ENCODE measurements at regions of chr5 and their contacts with region 1.

Region 1: DNA sequence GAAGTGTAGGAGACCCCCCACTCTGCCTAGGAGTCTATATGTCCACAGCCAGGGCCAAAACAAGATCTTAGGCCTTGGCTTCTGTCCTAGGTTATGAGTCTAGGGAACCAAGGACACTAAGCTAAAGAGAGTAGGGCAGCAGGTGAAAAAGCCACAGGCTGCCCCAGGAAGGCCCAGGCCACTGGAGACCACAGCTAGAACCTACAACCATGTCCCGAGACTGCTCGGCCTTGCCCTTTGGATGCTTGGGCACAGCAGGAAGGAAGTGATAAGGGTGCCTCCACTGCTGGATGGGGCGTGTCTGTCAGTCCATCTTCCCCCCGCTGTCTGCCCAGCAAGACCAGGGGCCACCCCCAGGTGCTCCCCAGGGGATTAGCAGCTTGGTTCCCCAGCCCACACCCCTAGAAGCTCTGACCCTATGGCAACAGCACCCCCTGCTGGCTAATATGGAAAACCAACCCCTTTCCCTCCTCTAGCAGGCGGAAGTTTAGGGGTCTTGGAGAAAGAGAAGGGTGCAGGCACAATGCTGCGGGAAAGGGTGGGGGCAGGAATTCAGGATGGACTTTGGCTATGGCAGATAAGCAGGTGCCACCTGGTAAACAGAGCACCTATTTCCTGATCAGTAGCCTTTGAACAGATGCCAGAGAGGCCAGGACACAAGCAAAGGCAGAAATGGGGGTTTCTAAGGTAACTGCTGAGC is 10.5 kb upstream of the IRF1 start:
- DNase-seq: peak; percentile 71
- H3K4me3 ChIP-seq: no peak overlapping the region
- H3K27ac ChIP-seq: peak overlapping the region; percentile 27
- H3K4me1 ChIP-seq: peaks cover 42% of the 10 kb centered on the region
- H3K27me3 ChIP-seq: no peaks in the 10 kb centered on the region
- CTCF ChIP-seq: peak; percentile 78 to 79
- POLR2A ChIP-seq: no peak

Region 2: DNA sequence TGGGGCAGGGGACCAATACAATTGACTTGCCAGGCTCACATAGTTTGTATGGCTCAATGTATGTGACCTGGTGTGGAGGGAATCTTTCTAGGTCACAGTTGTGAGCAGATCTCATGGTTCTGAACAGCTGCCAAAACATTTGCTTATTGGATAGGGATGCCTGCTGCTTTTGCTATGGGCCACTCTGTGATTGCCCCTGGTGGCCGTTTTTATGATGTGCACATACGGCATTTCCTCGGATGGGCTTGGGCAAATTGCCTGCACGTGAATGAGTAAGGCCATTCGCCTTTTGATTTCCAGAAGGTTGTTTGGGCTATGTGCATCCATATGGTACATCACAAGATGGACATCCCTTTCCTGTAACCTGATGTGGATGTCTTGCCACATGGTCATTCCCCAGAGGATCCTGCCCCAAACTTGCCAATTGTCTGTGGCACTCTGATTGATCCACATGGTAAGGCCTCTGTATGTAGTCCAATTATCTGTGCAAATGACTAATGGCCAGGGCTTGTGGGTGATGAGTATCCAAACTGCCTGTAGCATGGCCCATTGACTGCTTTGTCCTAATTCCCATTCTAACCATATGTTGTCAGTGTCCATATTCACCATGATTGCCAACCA is 217.5 kb before region 1 on chr5:
- CTCF ChIA-PET with region 1: no interaction called
- POLR2A ChIA-PET with region 1: no interaction called
- dilution Hi-C with region 1: no loop called
- intact Hi-C with region 1: no loop called
- DNase-seq: peak; percentile 62
- H3K4me3 ChIP-seq: no peak overlapping the region
- H3K27ac ChIP-seq: no peak overlapping the region
- H3K4me1 ChIP-seq: no peaks in the 10 kb centered on the region
- H3K27me3 ChIP-seq: peaks cover 0 to 2% of the 10 kb centered on the region in 2 experiments
- CTCF ChIP-seq: peak; percentile 69 to 71
- POLR2A ChIP-seq: no peak

Region 3: DNA sequence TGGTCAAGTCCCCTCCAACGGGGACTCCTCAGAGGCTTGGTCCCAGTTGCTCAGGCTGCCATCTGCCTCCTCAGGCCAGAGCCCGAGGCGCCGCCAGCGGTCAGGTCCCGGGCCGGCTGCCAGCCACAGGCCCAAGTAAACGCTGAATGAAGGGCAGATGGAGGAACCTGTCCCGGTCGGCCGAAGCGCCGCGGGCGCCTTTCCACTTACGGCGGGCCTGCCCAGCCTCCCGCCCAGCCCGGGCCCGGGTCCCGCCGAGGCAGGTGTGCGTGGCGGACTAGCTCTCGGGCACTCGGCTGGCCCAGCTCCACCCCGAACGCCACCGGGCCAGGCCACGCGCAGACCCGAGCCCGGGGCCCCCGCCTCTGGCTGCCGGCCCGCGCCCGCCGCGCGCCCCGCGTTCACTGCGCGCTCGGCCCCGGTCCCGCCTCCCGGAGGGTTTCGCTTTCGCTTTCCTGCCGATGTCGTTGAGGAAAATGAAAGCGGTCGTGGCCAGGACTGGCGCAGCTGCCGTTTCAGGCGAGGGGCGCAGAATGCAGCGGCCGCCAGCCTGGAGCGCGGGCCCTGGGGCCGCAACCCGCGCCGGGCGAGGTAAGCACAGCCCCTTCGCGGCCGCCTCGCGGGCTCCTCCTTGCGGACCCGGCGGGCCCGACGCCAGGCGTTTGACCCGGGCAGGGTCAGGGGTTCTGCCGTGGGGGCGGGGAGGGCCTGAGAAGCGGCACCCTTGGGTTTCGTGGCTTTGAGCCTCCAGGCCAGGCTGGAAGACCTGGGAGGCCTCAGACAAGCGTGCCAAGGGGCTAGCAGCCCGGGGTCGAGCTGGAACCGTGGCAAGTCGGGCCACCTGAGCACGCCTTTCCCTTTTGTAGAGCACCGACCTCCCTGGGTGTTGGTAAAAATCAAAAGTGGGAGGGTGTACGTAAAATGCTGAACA is 90.4 kb before region 1 on chr5:
- CTCF ChIA-PET with region 1: interaction called, 7 read pairs
- POLR2A ChIA-PET with region 1: no interaction called
- dilution Hi-C with region 1: no loop called
- intact Hi-C with region 1: loop called (anchors 1 kb)
- DNase-seq: peak; percentile 79
- H3K4me3 ChIP-seq: peak overlapping the region; percentile 69 to 77 (median 76)
- H3K27ac ChIP-seq: peak overlapping the region; percentile 92
- H3K4me1 ChIP-seq: peaks cover 46% of the 10 kb centered on the region
- H3K27me3 ChIP-seq: no peaks in the 10 kb centered on the region
- CTCF ChIP-seq: peak; percentile 72 to 82
- POLR2A ChIP-seq: peak; percentile 48

Region 4: DNA sequence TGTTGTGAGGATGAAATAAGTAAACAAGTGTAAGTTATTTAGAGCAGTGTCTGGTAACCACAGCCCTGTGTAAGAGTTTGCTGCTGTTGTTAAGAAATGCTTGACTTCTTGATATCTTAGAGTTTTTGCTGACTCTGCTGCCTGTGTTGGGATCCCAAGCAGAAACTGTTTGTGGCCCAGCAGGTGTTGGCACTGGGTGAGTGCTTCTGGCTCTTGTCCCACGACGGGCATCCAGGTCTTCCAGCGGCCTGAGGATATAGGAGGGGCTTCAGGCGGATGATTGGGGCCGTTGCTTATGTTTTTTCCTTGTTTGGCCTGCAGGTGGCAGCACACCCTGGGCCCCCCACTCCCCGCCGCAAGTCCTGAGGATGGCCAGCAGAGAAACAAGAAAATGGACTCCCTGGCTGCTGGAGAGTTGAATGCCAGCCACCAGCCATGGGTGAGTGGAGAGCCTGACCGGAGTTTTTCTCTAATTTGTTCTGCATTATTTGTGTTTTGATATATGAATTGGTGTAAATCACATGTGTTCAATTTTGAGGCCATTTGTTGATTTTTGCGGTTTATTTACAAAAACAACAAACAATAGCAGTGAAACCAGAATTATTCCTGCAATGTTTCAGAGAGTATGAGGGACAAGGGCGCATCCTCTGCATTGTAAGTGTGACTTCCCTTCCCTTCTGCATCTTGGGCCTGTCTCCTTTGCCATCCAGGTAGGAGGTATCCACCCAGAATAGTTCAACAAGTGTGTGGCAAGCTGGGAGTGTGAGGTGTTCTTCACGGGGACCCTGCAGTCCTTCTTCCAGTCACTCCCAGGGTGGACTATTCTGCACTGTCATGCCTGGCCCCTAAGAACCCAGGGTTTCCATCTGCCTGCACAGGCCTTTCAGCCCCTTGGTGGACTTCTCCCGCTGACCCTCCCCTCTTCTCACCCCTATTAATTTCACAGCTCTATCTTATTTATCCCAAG is 81.3 kb before region 1 on chr5:
- CTCF ChIA-PET with region 1: interaction called, 38 read pairs
- POLR2A ChIA-PET with region 1: no interaction called
- dilution Hi-C with region 1: no loop called
- intact Hi-C with region 1: loop called (anchors 1 kb)
- DNase-seq: peak; percentile 90
- H3K4me3 ChIP-seq: no peak overlapping the region
- H3K27ac ChIP-seq: peak overlapping the region; percentile 6
- H3K4me1 ChIP-seq: peaks cover 41% of the 10 kb centered on the region
- H3K27me3 ChIP-seq: no peaks in the 10 kb centered on the region
- CTCF ChIP-seq: peak; percentile 77 to 83
- POLR2A ChIP-seq: no peak

Region 5: DNA sequence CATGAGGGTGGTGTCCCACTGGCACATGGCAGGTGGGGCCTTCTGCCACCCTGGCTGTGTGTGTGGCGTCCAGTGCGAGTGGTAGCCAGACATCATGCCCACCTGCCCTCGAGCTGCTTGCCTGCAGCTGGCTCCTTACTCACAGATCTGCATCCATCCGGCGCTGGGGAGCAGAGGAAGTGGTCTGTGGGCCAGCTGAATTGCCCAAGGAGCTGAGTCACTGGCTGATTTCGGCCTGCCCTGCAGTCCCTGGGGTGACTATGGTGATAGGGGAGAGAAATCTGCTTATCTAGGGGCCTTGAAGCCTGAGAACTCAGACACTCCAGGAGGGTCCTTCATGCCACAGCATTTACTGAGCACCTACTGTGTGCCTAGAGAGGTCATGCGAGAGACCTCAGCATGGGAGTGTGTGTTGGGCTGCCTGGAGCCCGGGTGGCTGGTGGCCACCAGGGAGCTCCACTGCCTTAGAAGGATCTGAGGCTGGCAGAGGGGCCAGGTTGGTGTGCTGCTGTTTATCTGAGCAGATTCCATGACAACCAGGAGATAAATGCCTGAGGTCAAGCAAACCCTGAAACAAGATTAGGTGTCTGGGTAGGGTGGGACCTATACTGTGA is 74.4 kb before region 1 on chr5:
- CTCF ChIA-PET with region 1: interaction called, 24 read pairs
- POLR2A ChIA-PET with region 1: interaction called, 3 read pairs
- dilution Hi-C with region 1: no loop called
- intact Hi-C with region 1: loop called (anchors 1 kb)
- DNase-seq: peak; percentile 80
- H3K4me3 ChIP-seq: no peak overlapping the region
- H3K27ac ChIP-seq: peak overlapping the region; percentile 62
- H3K4me1 ChIP-seq: peaks cover 31% of the 10 kb centered on the region
- H3K27me3 ChIP-seq: no peaks in the 10 kb centered on the region
- CTCF ChIP-seq: peak; percentile 53 to 54
- POLR2A ChIP-seq: no peak

Region 6: GRCh38 chr5:132476876-132477781 is 24.0 kb before region 1 on chr5:
- CTCF ChIA-PET with region 1: interaction called, 13 read pairs
- POLR2A ChIA-PET with region 1: no interaction called
- dilution Hi-C with region 1: no loop called
- intact Hi-C with region 1: no loop called
- DNase-seq: no peak
- H3K4me3 ChIP-seq: no peak overlapping the region
- H3K27ac ChIP-seq: no peak overlapping the region
- H3K4me1 ChIP-seq: no peaks in the 10 kb centered on the region
- H3K27me3 ChIP-seq: no peaks in the 10 kb centered on the region
- CTCF ChIP-seq: no peak
- POLR2A ChIP-seq: no peak